ENCODE measurements at regions of chr4 and their contacts with region 1.

Region 1: DNA sequence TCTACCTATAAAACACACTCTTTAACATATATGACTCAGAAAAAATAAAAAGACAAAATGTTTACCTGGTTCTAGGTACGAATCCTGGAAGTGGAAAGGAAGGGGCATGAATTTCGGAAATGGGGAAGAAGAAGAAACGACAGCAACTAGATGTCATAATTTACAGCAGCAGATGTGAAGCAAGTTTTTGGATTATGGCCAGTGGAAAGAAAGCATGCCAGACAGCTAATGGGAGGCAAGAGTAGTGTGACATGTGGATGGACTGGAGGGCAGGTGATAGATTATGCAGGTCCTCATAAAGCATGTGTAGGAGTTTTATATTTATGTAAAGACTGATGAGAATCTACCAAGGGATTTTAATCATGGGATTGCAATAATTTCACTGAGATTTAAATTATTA is 279.0 kb upstream of the TACR3 start:
- DNase-seq: no peak

Region 2: DNA sequence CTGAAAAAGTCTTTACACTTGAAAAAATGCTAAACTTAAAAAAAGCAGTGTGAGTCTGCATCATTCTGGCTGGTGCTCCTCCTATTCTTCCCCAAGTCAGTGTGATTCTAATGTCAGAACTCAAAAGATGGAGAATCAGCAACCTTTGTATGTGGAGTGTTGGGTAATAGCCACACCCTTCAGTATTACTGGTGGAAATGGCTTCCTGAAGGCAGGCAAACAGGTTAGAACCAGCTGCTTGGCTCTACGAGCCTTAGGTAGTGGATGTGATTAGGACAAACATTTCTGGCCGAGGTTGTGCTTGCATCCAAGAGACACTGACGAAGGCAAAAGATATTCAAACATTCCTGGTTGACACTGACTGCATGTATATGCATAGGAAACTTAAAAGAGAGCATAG is 74.5 kb after region 1 on chr4:
- intact Hi-C with region 1: loop called in 1 of 2 experiments (anchors 2 kb)
- DNase-seq: no peak